ENCODE measurements at regions of chr7 and their contacts with region 1.

Region 1: DNA sequence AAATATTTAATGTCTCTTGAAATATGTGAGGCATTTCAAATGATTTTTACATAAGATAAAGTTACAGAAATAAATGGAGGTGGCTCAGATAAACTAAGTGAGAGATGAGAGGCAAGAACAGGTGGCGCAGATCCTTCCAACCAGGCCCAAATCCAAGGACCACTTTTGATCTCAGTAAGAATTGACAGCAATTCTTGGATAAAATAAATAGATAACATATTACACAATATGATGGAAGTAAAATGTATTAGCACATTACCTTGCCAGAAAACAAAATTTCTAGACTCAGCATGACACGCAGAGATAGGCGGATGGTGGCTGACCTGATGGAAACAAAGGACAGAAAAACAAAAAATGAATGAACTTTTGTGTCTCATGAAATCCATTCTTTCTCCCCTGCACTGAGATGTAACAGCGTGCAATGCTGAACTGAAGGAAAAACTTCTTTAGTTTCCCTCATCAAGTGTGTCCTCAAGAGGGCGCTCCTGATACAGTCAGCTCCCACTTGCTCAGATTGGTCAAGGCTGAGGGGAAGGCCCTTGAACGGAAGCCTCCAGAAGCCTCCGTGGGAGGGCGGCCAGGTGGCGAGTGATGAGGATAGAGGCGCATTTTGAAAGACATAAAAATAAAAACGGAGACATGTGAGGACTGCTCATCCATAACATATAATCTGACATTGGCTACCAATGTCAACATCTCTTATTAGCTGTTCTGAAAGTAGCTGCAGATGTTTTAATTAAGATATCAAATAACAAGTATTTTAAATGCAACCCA is 62.8 kb upstream of the GSDME start:
- DNase-seq: peak; percentile 89
- H3K4me3 Mint-ChIP-seq: peak overlapping the region; percentile 63
- H3K27ac Mint-ChIP-seq: peak overlapping the region; percentile 91
- H3K4me1 Mint-ChIP-seq: peaks cover 21% of the 10 kb centered on the region
- H3K27me3 Mint-ChIP-seq: no peaks in the 10 kb centered on the region

Region 2: DNA sequence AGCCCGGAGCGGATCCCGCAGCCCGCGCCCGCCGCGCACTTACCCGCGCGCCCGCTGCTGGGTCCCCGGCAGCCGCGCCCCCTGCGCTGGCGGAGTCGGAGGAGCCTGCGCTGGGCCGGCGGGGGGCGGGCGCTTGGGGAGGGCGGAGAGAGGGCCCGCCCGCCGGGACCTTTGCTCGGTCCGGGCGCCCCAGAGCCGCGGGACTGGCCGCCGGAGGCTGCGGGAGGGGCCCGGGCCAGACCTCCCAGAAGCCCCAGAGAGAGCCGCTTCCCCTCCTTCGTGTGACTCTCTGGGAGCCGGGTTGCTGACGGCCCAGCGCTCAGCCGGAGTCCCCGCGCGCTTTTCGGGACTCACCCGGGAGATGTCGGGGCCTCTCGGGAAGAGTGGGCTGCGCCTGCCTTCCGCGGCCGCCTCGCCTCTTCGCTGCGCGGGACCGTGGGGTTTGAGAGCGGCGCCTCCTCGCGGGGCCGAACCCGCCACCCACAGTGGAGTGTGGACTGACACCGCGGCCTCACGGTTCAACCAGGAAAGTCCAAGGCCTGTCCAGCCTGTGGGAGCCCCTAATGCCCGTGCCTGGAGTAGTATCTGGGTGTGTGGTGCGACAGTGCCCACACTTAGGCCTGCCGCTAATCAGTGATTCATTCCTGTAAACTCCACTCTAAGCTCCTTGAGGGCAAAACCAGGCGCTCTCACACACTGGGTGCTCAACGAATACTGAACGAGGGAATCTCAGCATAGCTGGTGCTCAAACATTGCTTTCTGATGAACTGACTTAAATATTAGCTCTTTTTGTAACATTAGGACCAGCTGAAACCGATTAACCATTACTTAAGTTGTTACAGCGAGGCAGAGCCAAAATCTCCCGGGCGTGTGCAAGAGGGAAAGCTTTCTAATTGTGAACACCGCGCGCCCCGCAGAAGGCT is 62.5 kb before region 1 on chr7 and contains the start of gene GSDME:
- CTCF ChIA-PET with region 1: interaction called, 5 read pairs
- intact Hi-C with region 1: loop called (anchors 1 kb)
- DNase-seq: no peak
- H3K4me3 Mint-ChIP-seq: peak within 1 kb of the TSS; percentile 85
- H3K27ac Mint-ChIP-seq: peak within 1 kb of the TSS; percentile 88
- H3K4me1 Mint-ChIP-seq: peaks cover 33% of the 10 kb centered on the region
- H3K27me3 Mint-ChIP-seq: peaks cover 39% of the 10 kb centered on the region
- total RNA-seq, gene GSDME: 6.8 to 6.9 TPM

Region 3: GRCh38 chr7:24786941-24787340 is 33.2 kb before region 1 on chr7:
- CTCF ChIA-PET with region 1: no interaction called
- intact Hi-C with region 1: no loop called
- DNase-seq: peak; percentile 24
- H3K4me3 Mint-ChIP-seq: no peak overlapping the region
- H3K27ac Mint-ChIP-seq: no peak overlapping the region
- H3K4me1 Mint-ChIP-seq: no peaks in the 10 kb centered on the region
- H3K27me3 Mint-ChIP-seq: no peaks in the 10 kb centered on the region

Region 4: GRCh38 chr7:24882989-24883621 is 63.0 kb after region 1 on chr7:
- CTCF ChIA-PET with region 1: interaction called, 11 read pairs
- intact Hi-C with region 1: loop called (anchors 1 kb)
- DNase-seq: peak; percentile 68
- H3K4me3 Mint-ChIP-seq: no peak overlapping the region
- H3K27ac Mint-ChIP-seq: no peak overlapping the region
- H3K4me1 Mint-ChIP-seq: peaks cover 75% of the 10 kb centered on the region
- H3K27me3 Mint-ChIP-seq: no peaks in the 10 kb centered on the region

Region 5: GRCh38 chr7:24917510-24918239 is 97.6 kb after region 1 on chr7:
- CTCF ChIA-PET with region 1: interaction called, 3 read pairs
- intact Hi-C with region 1: loop called (anchors 1 kb)
- DNase-seq: no peak
- H3K4me3 Mint-ChIP-seq: no peak overlapping the region
- H3K27ac Mint-ChIP-seq: peak overlapping the region; percentile 37
- H3K4me1 Mint-ChIP-seq: peaks cover 94% of the 10 kb centered on the region
- H3K27me3 Mint-ChIP-seq: no peaks in the 10 kb centered on the region

Region 6: GRCh38 chr7:24979863-24980533 is 159.9 kb after region 1 on chr7 and contains the start of gene OSBPL3:
- CTCF ChIA-PET with region 1: interaction called, 65 read pairs
- intact Hi-C with region 1: loop called (anchors 1 kb)
- DNase-seq: peak; percentile 95
- H3K4me3 Mint-ChIP-seq: peak within 1 kb of the TSS; percentile 87
- H3K27ac Mint-ChIP-seq: peak within 1 kb of the TSS; percentile 85
- H3K4me1 Mint-ChIP-seq: peaks cover 47% of the 10 kb centered on the region
- H3K27me3 Mint-ChIP-seq: no peaks in the 10 kb centered on the region
- total RNA-seq, gene OSBPL3: 25.1 to 27.9 TPM

Region 7: GRCh38 chr7:25093268-25093826 is 273.2 kb after region 1 on chr7:
- CTCF ChIA-PET with region 1: interaction called, 191 read pairs
- intact Hi-C with region 1: loop called (anchors 1 kb)
- DNase-seq: peak; percentile 90
- H3K4me3 Mint-ChIP-seq: no peak overlapping the region
- H3K27ac Mint-ChIP-seq: no peak overlapping the region
- H3K4me1 Mint-ChIP-seq: peaks cover 8% of the 10 kb centered on the region
- H3K27me3 Mint-ChIP-seq: peaks cover 2% of the 10 kb centered on the region